Panc1 (cell line): ENCODE measurements at regions of chr14 and their contacts with region 1.

Region 1: GRCh38 chr14:93115069-93115820 is 480 bp downstream of the ITPK1 start:
- DNase-seq: no peak
- ATAC-seq: peak; percentile 94
- H3K4me3 ChIP-seq: peak overlapping the region; percentile 64 to 70
- H3K27ac ChIP-seq: no peak overlapping the region
- H3K4me1 ChIP-seq: peaks cover 9% of the 10 kb centered on the region
- H3K27me3 ChIP-seq: no peaks in the 10 kb centered on the region
- CTCF ChIP-seq: no peak

Region 2: GRCh38 chr14:93132470-93133065 is 17.3 kb after region 1 on chr14:
- CTCF ChIA-PET with region 1: interaction called, 22 read pairs
- POLR2A ChIA-PET with region 1: no interaction called
- in situ Hi-C with region 1: no loop called
- intact Hi-C with region 1: no loop called
- DNase-seq: no peak
- ATAC-seq: peak; percentile 87
- H3K4me3 ChIP-seq: no peak overlapping the region
- H3K27ac ChIP-seq: no peak overlapping the region
- H3K4me1 ChIP-seq: no peaks in the 10 kb centered on the region
- H3K27me3 ChIP-seq: no peaks in the 10 kb centered on the region
- CTCF ChIP-seq: peak; percentile 68

Region 3: GRCh38 chr14:93137864-93138263 is 22.6 kb after region 1 on chr14:
- CTCF ChIA-PET with region 1: interaction called, 22 read pairs
- POLR2A ChIA-PET with region 1: no interaction called
- in situ Hi-C with region 1: no loop called
- intact Hi-C with region 1: loop called (anchors 1 kb)
- DNase-seq: no peak
- ATAC-seq: no peak
- H3K4me3 ChIP-seq: no peak overlapping the region
- H3K27ac ChIP-seq: no peak overlapping the region
- H3K4me1 ChIP-seq: no peaks in the 10 kb centered on the region
- H3K27me3 ChIP-seq: no peaks in the 10 kb centered on the region
- CTCF ChIP-seq: no peak

Region 4: DNA sequence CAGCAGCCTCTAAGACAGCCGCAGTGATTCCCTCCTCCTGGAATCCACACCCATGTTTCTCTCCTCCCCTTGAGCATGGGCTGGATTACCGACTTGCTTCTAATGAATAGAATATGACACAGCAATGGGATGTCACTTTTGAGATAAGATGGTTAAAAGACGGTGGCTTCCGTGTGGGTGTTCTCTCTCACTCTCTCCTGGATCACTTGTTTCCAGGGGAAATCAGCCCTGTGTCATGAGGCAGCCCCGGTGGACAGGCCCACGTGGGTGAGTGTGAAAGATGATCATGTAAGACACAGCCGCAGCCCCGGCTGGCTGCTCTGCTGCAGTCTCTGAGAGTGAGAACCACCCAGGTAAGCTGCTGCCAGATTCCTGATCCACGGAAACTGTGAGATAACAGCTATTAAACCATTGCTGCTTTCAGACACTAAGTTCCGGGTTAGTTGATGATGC is 58.7 kb after region 1 on chr14:
- CTCF ChIA-PET with region 1: interaction called, 10 read pairs
- POLR2A ChIA-PET with region 1: no interaction called
- in situ Hi-C with region 1: no loop called
- intact Hi-C with region 1: no loop called
- DNase-seq: no peak
- ATAC-seq: no peak
- H3K4me3 ChIP-seq: no peak overlapping the region
- H3K27ac ChIP-seq: no peak overlapping the region
- H3K4me1 ChIP-seq: no peaks in the 10 kb centered on the region
- H3K27me3 ChIP-seq: no peaks in the 10 kb centered on the region
- CTCF ChIP-seq: no peak